Caco-2 (cell line): ENCODE measurements at regions of chr22 and their contacts with region 1.

Region 1: DNA sequence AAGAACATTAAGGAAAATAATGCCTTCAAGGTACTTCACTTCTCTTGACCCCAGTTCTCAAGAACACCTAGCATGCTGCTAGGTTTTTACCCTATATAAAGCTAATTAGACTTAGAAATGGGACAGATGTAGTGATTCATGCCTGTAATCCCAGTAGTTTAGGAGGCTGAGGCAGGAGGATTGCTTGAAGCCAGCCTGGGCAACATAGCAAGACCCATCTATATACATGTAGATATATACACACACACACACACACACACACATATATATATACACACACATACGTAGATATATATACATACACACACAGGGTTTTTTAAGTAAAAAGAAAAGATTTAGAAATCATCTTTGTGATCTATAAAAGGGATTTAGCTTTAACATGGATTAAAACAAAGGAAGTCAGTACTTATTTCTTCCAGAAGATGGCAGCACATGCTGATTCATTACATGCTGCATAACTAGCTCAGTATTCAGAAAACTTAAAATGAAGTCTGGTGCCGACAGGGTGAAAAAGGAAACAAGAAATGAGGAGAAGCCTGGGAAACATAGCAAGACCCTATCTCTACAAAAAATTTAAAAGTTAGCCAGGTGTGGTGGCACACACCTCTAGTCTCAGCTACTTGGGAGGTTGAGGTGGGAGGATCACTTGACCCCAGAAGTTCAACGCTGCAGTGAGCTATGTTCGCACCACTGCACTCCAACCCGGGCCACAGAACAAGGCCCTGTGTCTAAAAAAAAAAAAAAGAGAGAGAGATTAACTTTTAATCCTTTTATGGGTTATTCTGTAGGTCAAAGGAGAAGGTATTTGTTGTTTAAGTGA is 28.5 kb upstream of the RBX1 start:
- DNase-seq: peak in 1 of 2 experiments; percentile 56
- H3K4me3 ChIP-seq: no peak overlapping the region
- H3K4me3 Mint-ChIP-seq: no peak overlapping the region
- H3K27ac Mint-ChIP-seq: peak overlapping the region; percentile 34
- H3K4me1 ChIP-seq: no peaks in the 10 kb centered on the region
- H3K4me1 Mint-ChIP-seq: no peaks in the 10 kb centered on the region
- H3K27me3 ChIP-seq: no peaks in the 10 kb centered on the region
- H3K27me3 Mint-ChIP-seq: no peaks in the 10 kb centered on the region
- CTCF ChIP-seq: peak; percentile 52 to 66

Region 2: DNA sequence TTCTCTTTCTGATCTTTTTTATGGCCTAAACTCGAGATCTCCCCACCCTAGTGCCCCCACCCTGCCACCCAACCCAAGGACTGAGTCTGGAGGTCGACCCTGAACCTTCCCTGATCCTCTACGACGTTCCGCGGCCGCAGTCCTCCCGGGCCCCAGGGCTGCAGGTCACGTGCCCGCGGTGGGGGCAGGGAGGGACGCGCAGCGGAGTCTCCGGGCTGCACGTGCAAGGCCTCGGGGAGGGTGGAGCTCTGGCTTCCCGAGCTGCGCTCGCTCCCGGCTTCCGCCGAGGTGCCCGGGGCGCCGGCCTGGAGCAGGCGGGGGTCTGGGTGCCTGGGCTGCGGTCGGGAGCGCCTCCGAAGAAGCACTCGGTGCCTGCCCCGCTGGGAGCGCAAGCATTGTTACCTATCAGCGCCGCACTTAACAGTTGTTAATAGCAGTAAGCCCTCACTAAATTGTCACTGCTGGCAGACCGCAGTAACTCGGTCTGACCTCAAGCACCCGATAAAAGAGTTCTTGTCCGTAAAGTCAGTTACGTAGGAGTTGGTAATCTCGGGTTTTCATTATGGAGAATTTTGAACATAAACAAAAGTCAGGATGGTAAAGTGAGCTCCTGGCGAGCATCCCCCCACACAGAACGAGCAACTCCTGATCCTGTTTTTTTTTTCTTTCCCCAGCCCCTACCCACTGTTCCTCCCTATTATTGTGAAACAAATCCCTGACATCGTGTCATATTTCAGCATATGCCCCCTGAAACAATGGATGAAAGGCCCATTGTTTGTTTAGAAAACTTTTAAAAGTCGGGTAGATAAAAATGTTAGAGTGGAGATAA is 100.0 kb after region 1 on chr22:
- CTCF ChIA-PET with region 1: interaction called, 10 read pairs
- POLR2A ChIA-PET with region 1: interaction called, 3 read pairs
- intact Hi-C with region 1: no loop called
- DNase-seq: peak; percentile 96 to 98
- H3K4me3 ChIP-seq: peak overlapping the region; percentile 81
- H3K4me3 Mint-ChIP-seq: peak overlapping the region; percentile 99
- H3K27ac Mint-ChIP-seq: peak overlapping the region; percentile 100
- H3K4me1 ChIP-seq: peaks cover 4% of the 10 kb centered on the region; the same call in 1 of the 2 replicates
- H3K4me1 Mint-ChIP-seq: peaks cover 15% of the 10 kb centered on the region
- H3K27me3 ChIP-seq: no peaks in the 10 kb centered on the region; the same call in 1 of the 2 replicates
- H3K27me3 Mint-ChIP-seq: no peaks in the 10 kb centered on the region
- CTCF ChIP-seq: no peak

Region 3: GRCh38 chr22:41091132-41092022 is 168.7 kb after region 1 on chr22:
- CTCF ChIA-PET with region 1: interaction called, 14 read pairs
- POLR2A ChIA-PET with region 1: no interaction called
- intact Hi-C with region 1: loop called (anchors 1 kb)
- DNase-seq: peak; percentile 97 to 98
- H3K4me3 ChIP-seq: peak overlapping the region; percentile 97
- H3K4me3 Mint-ChIP-seq: peak overlapping the region; percentile 79
- H3K27ac Mint-ChIP-seq: peak overlapping the region; percentile 96
- H3K4me1 ChIP-seq: 0 out of 2 replicates have a peak, but pooled peaks cover 3% of the 10 kb centered on the region
- H3K4me1 Mint-ChIP-seq: peaks cover 6% of the 10 kb centered on the region
- H3K27me3 ChIP-seq: no peaks in the 10 kb centered on the region
- H3K27me3 Mint-ChIP-seq: no peaks in the 10 kb centered on the region
- CTCF ChIP-seq: no peak

Region 4: GRCh38 chr22:41237707-41238569 is 315.2 kb after region 1 on chr22:
- CTCF ChIA-PET with region 1: interaction called, 39 read pairs
- POLR2A ChIA-PET with region 1: interaction called, 6 read pairs
- intact Hi-C with region 1: no loop called
- DNase-seq: peak; percentile 80 to 85
- H3K4me3 ChIP-seq: peak overlapping the region; percentile 29
- H3K4me3 Mint-ChIP-seq: peak overlapping the region; percentile 68
- H3K27ac Mint-ChIP-seq: no peak overlapping the region
- H3K4me1 ChIP-seq: 0 out of 2 replicates have a peak, but pooled peaks cover 5% of the 10 kb centered on the region
- H3K4me1 Mint-ChIP-seq: no peaks in the 10 kb centered on the region
- H3K27me3 ChIP-seq: no peaks in the 10 kb centered on the region
- H3K27me3 Mint-ChIP-seq: no peaks in the 10 kb centered on the region
- CTCF ChIP-seq: peak; percentile 50 to 69